ENCODE measurements at regions of chr3 and their contacts with region 1.

Region 1: DNA sequence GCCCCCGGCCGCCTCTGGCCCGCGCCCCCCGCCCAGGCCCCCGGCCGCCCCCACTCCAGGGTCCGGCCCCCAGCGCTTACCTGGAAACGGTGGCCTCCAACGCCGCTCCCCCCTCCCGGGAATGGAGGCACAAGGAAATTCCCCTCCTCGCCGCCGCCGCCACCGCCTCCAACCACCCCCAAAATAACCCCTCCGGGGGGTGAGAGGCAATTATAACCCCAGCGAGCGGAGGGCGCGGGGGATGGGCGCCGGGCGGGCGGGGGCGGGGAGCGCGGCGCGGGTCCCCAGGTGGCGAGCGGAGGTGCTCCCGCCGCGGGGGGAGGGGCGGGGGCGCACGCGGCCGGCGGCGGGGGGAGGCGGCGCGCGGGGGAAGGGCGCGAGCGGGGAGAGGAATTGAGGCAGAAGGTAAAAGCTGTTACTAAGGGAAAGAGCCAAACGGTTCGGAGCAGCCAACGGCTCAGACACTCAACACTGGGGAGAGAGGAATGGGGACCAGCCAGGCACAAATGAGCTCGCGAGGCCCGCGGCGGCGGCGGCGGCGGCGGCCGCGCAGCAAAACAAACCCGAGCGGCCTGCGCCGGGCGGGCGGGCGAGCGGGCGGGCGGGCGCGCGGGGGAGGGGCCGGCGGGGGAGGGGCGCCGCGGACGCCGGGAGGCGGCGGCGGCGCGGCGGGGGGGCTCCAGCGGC is at the start of gene TBL1XR1:
- DNase-seq: peak; percentile 83 to 95 (median 86)
- ATAC-seq: peak; percentile 40
- H3K4me3 ChIP-seq: peak within 1 kb of the TSS; percentile 93
- H3K27ac ChIP-seq: peak within 1 kb of the TSS; percentile 100
- H3K4me1 ChIP-seq: peaks cover 4 to 23% of the 10 kb centered on the region in 2 experiments
- H3K27me3 ChIP-seq: no peaks in the 10 kb centered on the region
- CTCF ChIP-seq: no peak
- EP300 ChIP-seq: peak; percentile 77
- POLR2A ChIP-seq: no peak
- RAD21 ChIP-seq: 0 out of 4 replicates have a peak, but pooled peaks of 1 of the 2 experiments have one; percentile 4
- polyA plus RNA-seq, gene TBL1XR1: 19.6 to 90.2 TPM

Region 2: GRCh38 chr3:176967497-176967896 is 229.7 kb before region 1 on chr3:
- CTCF ChIA-PET with region 1: no interaction called
- POLR2A ChIA-PET with region 1: no interaction called
- in situ Hi-C with region 1: no loop called
- intact Hi-C with region 1: no loop called
- DNase-seq: no peak
- ATAC-seq: no peak
- H3K4me3 ChIP-seq: no peak overlapping the region
- H3K27ac ChIP-seq: no peak overlapping the region
- H3K4me1 ChIP-seq: no peaks in the 10 kb centered on the region
- H3K27me3 ChIP-seq: no peaks in the 10 kb centered on the region
- CTCF ChIP-seq: no peak
- EP300 ChIP-seq: no peak
- POLR2A ChIP-seq: no peak
- RAD21 ChIP-seq: no peak

Region 3: DNA sequence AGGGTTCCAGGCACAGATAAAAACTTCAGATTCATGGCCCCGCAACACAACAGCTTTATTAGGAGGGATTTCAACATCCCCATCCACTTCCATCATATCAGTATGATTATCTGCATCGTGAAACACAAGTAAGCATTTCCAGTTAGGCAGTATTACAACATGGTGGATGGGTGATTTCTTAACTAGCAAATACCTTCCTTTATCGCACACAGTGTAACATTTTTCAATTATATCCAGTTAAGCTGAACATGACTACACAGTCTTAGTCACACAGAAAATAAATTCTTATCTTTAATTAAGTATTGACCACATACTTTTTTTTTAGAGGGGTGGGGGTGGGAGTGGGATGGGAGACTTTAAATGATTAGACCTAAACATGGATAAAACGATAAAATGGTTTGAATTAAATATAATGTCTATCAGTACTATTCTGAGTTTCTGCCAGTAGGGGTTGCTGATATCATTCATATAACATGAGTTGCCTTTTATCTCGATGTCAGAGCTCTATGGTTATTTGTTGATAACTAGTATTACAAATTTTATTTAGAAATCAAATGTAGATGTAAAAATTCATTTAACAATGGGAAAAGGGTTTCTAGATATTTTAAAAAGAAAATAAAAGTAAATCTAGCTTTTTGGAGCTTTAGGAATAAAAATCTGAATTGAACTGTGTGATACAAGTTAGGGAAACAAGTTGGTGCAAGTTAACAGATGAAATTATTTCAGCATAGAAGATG is 146.5 kb before region 1 on chr3:
- CTCF ChIA-PET with region 1: no interaction called
- POLR2A ChIA-PET with region 1: interaction called, 4 read pairs
- in situ Hi-C with region 1: loop called (anchors 10 kb)
- intact Hi-C with region 1: loop called (anchors 2 kb)
- DNase-seq: peak in 3 of 4 experiments; percentile 17 to 34 (median 20)
- ATAC-seq: peak; percentile 75
- H3K4me3 ChIP-seq: no peak overlapping the region
- H3K27ac ChIP-seq: no peak overlapping the region
- H3K4me1 ChIP-seq: no peaks in the 10 kb centered on the region; a peak in 2 of 5 replicates
- H3K27me3 ChIP-seq: no peaks in the 10 kb centered on the region
- CTCF ChIP-seq: peak in 1 of 3 experiments; percentile 57; a peak in 2 of 6 replicates
- EP300 ChIP-seq: no peak
- POLR2A ChIP-seq: no peak
- RAD21 ChIP-seq: peak; percentile 71 to 73

Region 4: GRCh38 chr3:177179281-177180067 is 17.7 kb before region 1 on chr3:
- CTCF ChIA-PET with region 1: no interaction called
- POLR2A ChIA-PET with region 1: interaction called, 18 read pairs
- in situ Hi-C with region 1: no loop called
- intact Hi-C with region 1: loop called (anchors 2 kb)
- DNase-seq: peak in 1 of 4 experiments; percentile 39
- ATAC-seq: peak; percentile 11
- H3K4me3 ChIP-seq: no peak overlapping the region; the same call in 1 of the 2 replicates
- H3K27ac ChIP-seq: peak overlapping the region; percentile 51
- H3K4me1 ChIP-seq: peaks cover 28 to 34% of the 10 kb centered on the region in 2 experiments; a peak in 4 of 5 replicates
- H3K27me3 ChIP-seq: no peaks in the 10 kb centered on the region
- CTCF ChIP-seq: no peak
- EP300 ChIP-seq: no peak
- POLR2A ChIP-seq: no peak
- RAD21 ChIP-seq: no peak

Region 5: DNA sequence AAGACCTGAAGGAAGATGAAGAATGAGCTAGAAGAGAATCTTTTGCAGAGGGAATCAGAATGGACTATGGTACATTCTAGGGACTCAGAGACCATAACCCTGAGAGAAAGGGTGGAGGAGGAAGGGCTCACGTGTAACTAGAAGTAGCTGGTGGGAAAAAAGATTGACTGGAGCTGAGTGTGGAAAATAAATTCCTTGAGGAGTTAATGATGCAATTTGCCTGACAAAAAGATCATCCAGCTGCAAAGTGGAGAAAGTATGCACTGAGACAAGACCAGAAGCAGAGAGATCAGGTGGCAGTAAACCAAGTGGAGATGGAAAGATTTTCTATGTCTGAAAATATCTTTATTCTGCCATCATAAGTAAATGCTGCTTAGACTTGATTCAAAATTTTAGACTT is 53.0 kb after region 1 on chr3:
- CTCF ChIA-PET with region 1: no interaction called
- POLR2A ChIA-PET with region 1: no interaction called
- in situ Hi-C with region 1: no loop called
- intact Hi-C with region 1: no loop called
- DNase-seq: no peak
- ATAC-seq: peak; percentile 35
- H3K4me3 ChIP-seq: no peak overlapping the region
- H3K27ac ChIP-seq: no peak overlapping the region
- H3K4me1 ChIP-seq: no peaks in the 10 kb centered on the region
- H3K27me3 ChIP-seq: no peaks in the 10 kb centered on the region
- CTCF ChIP-seq: no peak
- EP300 ChIP-seq: no peak
- POLR2A ChIP-seq: no peak
- RAD21 ChIP-seq: no peak

Region 6: DNA sequence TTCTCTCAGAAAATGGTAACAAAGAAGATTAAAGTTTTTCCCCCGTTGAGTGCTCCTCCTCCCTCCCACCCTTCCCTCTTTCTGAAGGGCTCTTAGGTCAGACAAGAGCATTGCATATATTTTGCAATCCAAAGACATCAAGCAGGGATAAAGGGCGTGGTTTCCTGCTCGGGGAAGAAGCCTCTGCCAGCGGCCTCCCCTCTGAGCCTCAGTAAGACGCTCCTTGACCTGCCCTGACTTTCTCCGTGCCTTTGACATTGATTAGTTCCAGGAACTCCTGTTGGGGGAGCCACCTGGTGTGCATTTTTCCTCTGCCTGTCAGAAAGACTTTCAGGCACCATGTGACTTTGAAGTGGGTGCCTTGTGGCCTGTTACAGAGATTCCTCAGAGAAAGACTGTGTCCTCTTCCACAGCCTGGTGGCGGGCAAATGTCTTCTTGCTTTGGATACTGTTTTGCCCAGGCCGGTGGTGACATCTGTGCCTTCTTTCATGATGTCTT is 87.2 kb after region 1 on chr3:
- CTCF ChIA-PET with region 1: no interaction called
- POLR2A ChIA-PET with region 1: no interaction called
- in situ Hi-C with region 1: no loop called
- intact Hi-C with region 1: loop called (anchors 5 kb)
- DNase-seq: peak; percentile 64 to 91 (median 74)
- ATAC-seq: peak; percentile 90
- H3K4me3 ChIP-seq: no peak overlapping the region
- H3K27ac ChIP-seq: peak overlapping the region; percentile 69
- H3K4me1 ChIP-seq: peaks cover 0 to 36% of the 10 kb centered on the region in 2 experiments; a peak in 4 of 5 replicates
- H3K27me3 ChIP-seq: no peaks in the 10 kb centered on the region
- CTCF ChIP-seq: peak; percentile 31 to 52 (median 35)
- EP300 ChIP-seq: peak; percentile 80
- POLR2A ChIP-seq: no peak
- RAD21 ChIP-seq: peak; percentile 11 to 69; a peak in 2 of 4 replicates

Region 7: GRCh38 chr3:177378168-177378567 is 181.0 kb after region 1 on chr3:
- CTCF ChIA-PET with region 1: no interaction called
- POLR2A ChIA-PET with region 1: no interaction called
- in situ Hi-C with region 1: no loop called
- intact Hi-C with region 1: no loop called
- DNase-seq: no peak
- ATAC-seq: no peak
- H3K4me3 ChIP-seq: no peak overlapping the region
- H3K27ac ChIP-seq: no peak overlapping the region
- H3K4me1 ChIP-seq: no peaks in the 10 kb centered on the region; a peak in 1 of 5 replicates
- H3K27me3 ChIP-seq: no peaks in the 10 kb centered on the region
- CTCF ChIP-seq: no peak
- EP300 ChIP-seq: no peak
- POLR2A ChIP-seq: no peak
- RAD21 ChIP-seq: no peak

Region 8: DNA sequence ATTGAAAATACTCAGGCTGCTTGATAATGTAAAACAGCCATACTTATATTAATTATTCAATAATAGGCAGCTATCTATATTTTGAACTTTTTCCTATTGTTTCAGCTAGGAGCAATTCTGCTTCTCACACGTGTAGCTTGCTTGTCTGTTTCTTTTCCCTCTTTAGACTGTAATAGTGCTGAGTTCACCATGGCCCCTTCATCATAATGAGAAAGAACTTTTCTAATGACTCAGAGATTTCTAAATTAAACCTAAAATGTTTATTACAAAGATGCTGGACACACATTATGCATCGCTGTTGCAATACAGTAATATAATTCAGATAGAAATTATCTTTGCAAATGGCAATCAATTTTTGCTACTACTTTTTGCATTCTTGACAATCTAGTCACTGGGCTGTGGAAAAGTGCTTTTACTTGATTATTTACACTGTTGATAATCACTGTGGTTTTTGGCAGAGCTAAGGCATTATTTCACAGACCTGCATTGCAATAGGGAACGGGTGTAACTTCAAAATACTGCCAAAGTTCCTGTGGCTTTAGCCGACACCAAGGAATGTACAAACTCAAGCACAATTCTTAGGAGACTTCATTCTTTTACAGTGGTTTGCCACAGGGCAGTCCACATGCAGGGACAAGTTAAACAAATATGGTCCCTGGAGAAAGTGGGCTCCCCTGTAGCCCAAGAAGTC is 281.1 kb after region 1 on chr3:
- CTCF ChIA-PET with region 1: no interaction called
- POLR2A ChIA-PET with region 1: no interaction called
- in situ Hi-C with region 1: no loop called
- intact Hi-C with region 1: loop called (anchors 10 kb)
- DNase-seq: no peak
- ATAC-seq: no peak
- H3K4me3 ChIP-seq: no peak overlapping the region
- H3K27ac ChIP-seq: no peak overlapping the region
- H3K4me1 ChIP-seq: peaks cover 2 to 4% of the 10 kb centered on the region in 2 experiments; a peak in 2 of 5 replicates
- H3K27me3 ChIP-seq: no peaks in the 10 kb centered on the region
- CTCF ChIP-seq: no peak
- EP300 ChIP-seq: no peak
- POLR2A ChIP-seq: no peak
- RAD21 ChIP-seq: no peak

Region 9: GRCh38 chr3:177589911-177590381 is 392.8 kb after region 1 on chr3:
- CTCF ChIA-PET with region 1: no interaction called
- POLR2A ChIA-PET with region 1: no interaction called
- in situ Hi-C with region 1: no loop called
- intact Hi-C with region 1: no loop called
- DNase-seq: no peak
- ATAC-seq: no peak
- H3K4me3 ChIP-seq: no peak overlapping the region
- H3K27ac ChIP-seq: no peak overlapping the region
- H3K4me1 ChIP-seq: peaks cover 0 to 3% of the 10 kb centered on the region in 2 experiments; a peak in 2 of 5 replicates
- H3K27me3 ChIP-seq: no peaks in the 10 kb centered on the region
- CTCF ChIP-seq: no peak
- EP300 ChIP-seq: no peak
- POLR2A ChIP-seq: no peak
- RAD21 ChIP-seq: no peak